Adrenal gland (tissue), 19 donors: ENCODE measurements at regions of chr19 and their contacts with region 1.

Region 1: GRCh38 chr19:41883821-41884733 is 1.1 kb downstream of the ARHGEF1 start:
- DNase-seq: peak; percentile 93 to 97 (median 95)
- H3K4me3 ChIP-seq: peak overlapping the region; percentile 43 to 95 (median 80)
- H3K27ac ChIP-seq: peak overlapping the region in 4 of 5 donors; percentile 67 to 90 (median 76)
- H3K4me1 ChIP-seq: peaks cover 0 to 13% of the 10 kb centered on the region in 2 donors
- H3K27me3 ChIP-seq: no peaks in the 10 kb centered on the region
- CTCF ChIP-seq: peak in 1 of 6 experiments; percentile 15
- POLR2A ChIP-seq: peak; percentile 60 to 94

Region 2: GRCh38 chr19:41934849-41935374 is 50.8 kb after region 1 on chr19:
- intact Hi-C with region 1: loop called in 1 of 2 experiments (anchors 10 kb)
- DNase-seq: peak; percentile 47 to 76 (median 66)
- H3K4me3 ChIP-seq: no peak overlapping the region
- H3K27ac ChIP-seq: no peak overlapping the region
- H3K4me1 ChIP-seq: peaks cover 0 to 2% of the 10 kb centered on the region in 2 donors
- H3K27me3 ChIP-seq: peaks cover 42% of the 10 kb centered on the region
- CTCF ChIP-seq: peak; percentile 46 to 74 (median 72)
- POLR2A ChIP-seq: no peak

Region 3: DNA sequence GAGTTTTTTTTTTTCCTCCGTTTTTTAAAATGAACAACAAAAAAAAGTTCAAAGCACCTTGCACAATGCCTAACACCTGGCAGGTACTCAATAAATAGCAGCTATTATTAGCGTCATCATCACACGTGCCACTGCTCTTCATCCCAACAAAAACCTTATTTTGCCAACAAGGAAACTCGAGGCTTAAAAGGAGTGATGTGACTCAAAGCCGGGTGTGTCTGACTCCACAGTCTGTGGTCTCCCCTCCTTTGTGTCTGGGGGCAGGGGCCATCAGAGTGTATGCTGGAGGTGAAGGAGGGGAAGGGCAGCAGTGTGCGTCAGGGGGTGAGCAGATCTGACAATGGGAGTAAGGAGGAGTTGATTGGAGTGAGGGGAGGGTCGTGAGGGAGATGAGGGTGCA is 282.2 kb after region 1 on chr19:
- intact Hi-C with region 1: no loop called
- DNase-seq: no peak
- H3K4me3 ChIP-seq: no peak overlapping the region
- H3K27ac ChIP-seq: no peak overlapping the region
- H3K4me1 ChIP-seq: no peaks in the 10 kb centered on the region
- H3K27me3 ChIP-seq: no peaks in the 10 kb centered on the region
- CTCF ChIP-seq: no peak
- POLR2A ChIP-seq: no peak